Mammary epithelial cell (primary cell): ENCODE measurements at regions of chr4 and their contacts with region 1.

Region 1: GRCh38 chr4:118034053-118034785 is at the start of gene NDST3:
- DNase-seq: peak; percentile 61
- H3K4me3 ChIP-seq: peak within 1 kb of the TSS; percentile 48 to 59 (median 51)
- H3K27ac ChIP-seq: no peak within 1 kb of the TSS
- H3K4me1 ChIP-seq: peaks cover 8% of the 10 kb centered on the region
- H3K27me3 ChIP-seq: peaks cover 8% of the 10 kb centered on the region
- CTCF ChIP-seq: peak; percentile 55 to 66
- total RNA-seq, gene NDST3: not detected

Region 2: DNA sequence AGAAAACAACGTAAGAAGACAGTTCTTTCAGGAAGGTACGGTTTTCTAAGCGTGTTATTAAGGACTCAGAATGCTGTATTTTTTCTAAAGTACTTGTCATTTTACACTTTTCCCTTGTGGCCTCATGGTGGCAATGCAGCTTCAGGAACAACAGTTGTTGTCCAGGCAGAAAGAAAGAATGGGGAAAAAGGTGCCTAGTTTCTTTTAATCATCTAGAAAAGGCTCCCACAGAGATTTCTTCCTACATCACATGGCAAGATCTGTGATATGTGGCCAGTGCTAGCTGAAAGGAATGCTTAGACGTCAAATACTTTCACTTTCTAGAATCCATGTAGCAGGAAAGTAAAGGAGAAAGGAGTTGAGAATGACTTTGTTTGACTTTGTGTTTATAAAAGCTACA is 899.8 kb before region 1 on chr4:
- CTCF ChIA-PET with region 1: no interaction called
- dilution Hi-C with region 1: no loop called
- in situ Hi-C with region 1: loop called in 1 of 2 experiments (anchors 25 kb)
- intact Hi-C with region 1: loop called (anchors 1 kb)
- DNase-seq: peak; percentile 71
- H3K4me3 ChIP-seq: no peak overlapping the region
- H3K27ac ChIP-seq: no peak overlapping the region
- H3K4me1 ChIP-seq: peaks cover 14% of the 10 kb centered on the region
- H3K27me3 ChIP-seq: no peaks in the 10 kb centered on the region
- CTCF ChIP-seq: peak; percentile 69 to 79

Region 3: GRCh38 chr4:117324851-117325491 is 709.2 kb before region 1 on chr4:
- CTCF ChIA-PET with region 1: no interaction called
- dilution Hi-C with region 1: no loop called
- in situ Hi-C with region 1: no loop called
- intact Hi-C with region 1: loop called (anchors 5 kb)
- DNase-seq: peak; percentile 98
- H3K4me3 ChIP-seq: peak overlapping the region in 2 of 3 experiments; percentile 62 to 80
- H3K27ac ChIP-seq: peak overlapping the region; percentile 98
- H3K4me1 ChIP-seq: peaks cover 12% of the 10 kb centered on the region
- H3K27me3 ChIP-seq: no peaks in the 10 kb centered on the region
- CTCF ChIP-seq: no peak

Region 4: DNA sequence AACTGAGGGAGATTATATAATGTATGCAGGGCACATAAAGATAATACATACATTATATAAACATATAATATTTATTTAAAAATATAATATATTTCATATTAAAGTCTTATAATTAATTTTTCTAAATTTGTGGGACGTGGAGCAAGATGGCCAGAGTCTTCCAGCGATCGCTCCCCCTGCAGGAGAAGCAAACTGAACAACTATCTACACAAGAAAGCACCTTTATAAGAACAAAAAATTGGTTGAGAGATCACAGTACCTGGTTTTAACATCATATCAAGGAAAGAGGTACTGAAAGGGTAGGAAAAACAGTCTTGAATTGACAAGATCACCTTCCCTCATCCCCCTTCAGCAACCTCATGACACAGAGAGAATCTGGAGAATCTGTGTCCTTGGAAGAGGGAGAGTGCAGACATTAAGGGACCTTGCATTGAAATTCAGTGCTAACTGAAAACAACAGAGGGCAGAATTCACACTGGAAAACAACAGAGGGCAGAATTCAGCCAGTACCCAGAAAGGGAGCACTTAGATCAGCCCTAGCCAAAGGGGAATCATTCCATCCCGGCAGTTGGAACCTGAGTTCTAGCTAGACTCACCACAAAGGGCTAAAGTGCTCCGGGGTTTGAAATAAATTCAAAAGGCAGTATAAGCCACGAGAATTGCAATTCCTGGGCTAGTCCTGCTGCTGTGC is 262.4 kb before region 1 on chr4:
- CTCF ChIA-PET with region 1: no interaction called
- dilution Hi-C with region 1: no loop called
- in situ Hi-C with region 1: no loop called
- intact Hi-C with region 1: loop called (anchors 5 kb)
- DNase-seq: no peak
- H3K4me3 ChIP-seq: no peak overlapping the region
- H3K27ac ChIP-seq: no peak overlapping the region
- H3K4me1 ChIP-seq: no peaks in the 10 kb centered on the region
- H3K27me3 ChIP-seq: no peaks in the 10 kb centered on the region
- CTCF ChIP-seq: peak in 1 of 2 donors; percentile 44